BJ (cell line): ENCODE measurements at regions of chr12 and their contacts with region 1.

Region 1: DNA sequence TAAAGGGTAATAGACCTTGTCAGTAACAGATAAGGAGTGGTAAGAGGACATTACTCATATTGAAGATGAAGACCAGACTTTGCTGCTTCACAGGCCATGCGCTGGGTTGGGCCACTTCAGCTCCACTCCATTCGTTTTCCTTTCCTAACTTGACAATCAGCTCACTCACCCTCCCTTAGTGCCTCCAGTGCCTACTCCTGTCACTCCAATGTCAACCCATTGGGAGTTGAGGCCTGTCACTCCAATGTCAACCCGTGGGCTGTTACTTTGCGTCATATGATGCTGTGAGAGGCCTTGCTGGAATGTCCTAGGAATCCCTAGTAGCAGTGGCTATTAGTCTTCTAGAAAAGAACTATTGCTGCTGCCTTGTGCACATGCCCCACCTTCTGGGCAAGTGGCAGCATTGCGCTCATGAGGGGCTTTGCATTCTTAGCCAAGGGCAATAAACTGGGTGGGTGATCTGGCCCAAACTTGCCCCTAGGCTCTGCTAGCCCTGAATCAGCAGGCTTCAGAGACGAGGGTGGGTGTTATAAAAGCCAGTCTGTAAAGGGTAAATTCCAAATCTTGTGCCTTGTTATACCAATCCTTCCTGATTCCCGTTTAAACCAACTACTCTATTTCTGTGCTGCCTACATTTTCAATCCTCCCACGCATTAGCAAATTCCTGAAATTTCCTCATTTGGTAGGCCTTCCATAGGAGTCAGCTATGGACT is 36.1 kb downstream of the BAZ2A start:
- DNase-seq: peak; percentile 33
- H3K4me3 ChIP-seq: no peak overlapping the region
- H3K27me3 ChIP-seq: no peaks in the 10 kb centered on the region
- CTCF ChIP-seq: peak; percentile 90

Region 2: GRCh38 chr12:56431850-56432249 is 162.2 kb before region 1 on chr12:
- CTCF ChIA-PET with region 1: no interaction called
- POLR2A ChIA-PET with region 1: no interaction called
- DNase-seq: no peak
- H3K4me3 ChIP-seq: no peak overlapping the region
- H3K27me3 ChIP-seq: no peaks in the 10 kb centered on the region
- CTCF ChIP-seq: no peak

Region 3: GRCh38 chr12:56521590-56522371 is 72.3 kb before region 1 on chr12 and contains the start of gene RBMS2:
- CTCF ChIA-PET with region 1: interaction called, 21 read pairs
- POLR2A ChIA-PET with region 1: no interaction called
- DNase-seq: peak; percentile 77
- H3K4me3 ChIP-seq: peak within 1 kb of the TSS; percentile 49
- H3K27me3 ChIP-seq: no peaks in the 10 kb centered on the region
- CTCF ChIP-seq: no peak
- polyA plus RNA-seq, gene RBMS2: 67.9 and 68.4 TPM in 2 replicates

Region 4: DNA sequence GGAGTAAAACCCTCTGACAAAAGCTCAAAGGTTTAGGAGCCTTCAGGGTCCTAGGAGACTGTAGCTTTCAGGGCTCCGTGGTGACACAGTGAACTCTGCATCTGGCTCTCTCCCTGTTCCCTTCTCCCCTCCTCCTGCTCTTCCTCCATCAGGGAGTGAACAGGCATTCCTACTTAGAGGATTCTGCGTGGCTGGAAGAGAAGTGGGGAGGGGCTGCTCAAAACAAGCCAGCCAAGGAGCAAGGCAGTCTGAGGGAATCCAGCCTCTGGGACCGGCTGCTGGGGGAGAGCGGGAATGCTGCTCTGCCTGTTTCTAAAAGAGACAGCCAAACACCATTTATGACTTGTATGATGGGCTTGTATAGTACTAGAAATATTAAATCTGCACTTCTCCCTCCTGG is 22.9 kb before region 1 on chr12:
- CTCF ChIA-PET with region 1: interaction called, 10 read pairs
- POLR2A ChIA-PET with region 1: no interaction called
- DNase-seq: no peak
- H3K4me3 ChIP-seq: no peak overlapping the region
- H3K27me3 ChIP-seq: no peaks in the 10 kb centered on the region
- CTCF ChIP-seq: no peak

Region 5: DNA sequence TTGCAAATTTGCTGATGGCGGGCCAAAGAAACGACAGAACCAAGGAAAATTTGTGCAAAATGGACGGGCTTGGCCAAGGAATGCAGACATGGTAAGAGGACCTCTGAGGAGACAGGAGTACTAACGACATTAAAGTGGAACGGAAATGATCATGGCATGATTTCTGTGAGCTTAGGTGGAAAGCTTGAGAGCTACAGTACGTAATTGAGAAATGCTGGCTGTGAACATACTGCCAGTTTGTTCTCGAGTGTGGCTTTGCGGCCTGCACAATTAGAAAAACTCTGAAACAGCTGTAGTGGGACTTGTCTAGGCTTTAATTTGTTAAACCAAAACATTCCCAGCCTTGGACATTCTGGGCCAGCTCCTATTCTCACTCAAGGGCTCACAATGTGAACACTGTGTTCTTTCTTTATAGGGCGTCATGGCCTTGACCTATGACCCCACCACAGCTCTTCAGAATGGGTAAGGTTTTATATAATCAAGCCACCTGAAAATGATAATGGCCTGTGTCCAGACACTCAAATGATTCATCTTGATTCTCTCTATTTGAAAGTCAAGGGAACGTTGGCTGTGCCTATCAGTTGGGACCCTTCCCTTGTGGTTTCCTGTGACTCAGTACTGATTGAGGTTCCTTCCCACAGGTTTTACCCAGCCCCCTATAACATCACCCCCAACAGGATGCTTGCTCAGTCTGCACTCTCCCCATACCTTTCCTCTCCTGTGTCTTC is 12.5 kb before region 1 on chr12:
- CTCF ChIA-PET with region 1: interaction called, 25 read pairs
- POLR2A ChIA-PET with region 1: no interaction called
- DNase-seq: no peak
- H3K4me3 ChIP-seq: no peak overlapping the region
- H3K27me3 ChIP-seq: no peaks in the 10 kb centered on the region
- CTCF ChIP-seq: no peak

Region 6: GRCh38 chr12:56616925-56617324 is 22.9 kb after region 1 on chr12:
- CTCF ChIA-PET with region 1: interaction called, 12 read pairs
- POLR2A ChIA-PET with region 1: no interaction called
- DNase-seq: no peak
- H3K4me3 ChIP-seq: no peak overlapping the region
- H3K27me3 ChIP-seq: no peaks in the 10 kb centered on the region
- CTCF ChIP-seq: no peak

Region 7: GRCh38 chr12:56709759-56710376 is 115.8 kb after region 1 on chr12:
- CTCF ChIA-PET with region 1: no interaction called
- POLR2A ChIA-PET with region 1: no interaction called
- DNase-seq: no peak
- H3K4me3 ChIP-seq: no peak overlapping the region
- H3K27me3 ChIP-seq: no peaks in the 10 kb centered on the region
- CTCF ChIP-seq: no peak

Region 8: DNA sequence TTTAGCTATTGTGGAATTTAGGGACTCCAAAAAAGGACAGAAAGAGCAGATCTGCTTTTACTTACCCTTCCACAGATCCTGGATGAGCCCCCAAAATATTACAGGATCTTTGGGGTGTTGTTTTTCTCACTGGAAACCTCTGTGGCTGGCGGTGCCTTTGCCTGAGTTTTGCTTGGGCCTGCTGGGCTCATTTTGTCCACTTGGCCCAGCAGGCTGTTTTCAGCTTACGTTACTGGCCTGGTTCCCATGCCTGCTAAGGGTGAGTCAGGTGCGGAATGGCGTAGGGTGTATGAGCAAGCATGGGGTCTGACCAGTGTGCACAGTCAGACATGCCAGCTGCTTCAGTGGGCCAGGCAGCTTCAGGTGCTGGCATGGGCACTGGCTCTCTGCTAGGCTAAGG is 214.9 kb after region 1 on chr12:
- CTCF ChIA-PET with region 1: no interaction called
- POLR2A ChIA-PET with region 1: no interaction called
- DNase-seq: no peak
- H3K4me3 ChIP-seq: no peak overlapping the region
- H3K27me3 ChIP-seq: no peaks in the 10 kb centered on the region
- CTCF ChIP-seq: no peak

Region 9: GRCh38 chr12:56941299-56942017 is 347.4 kb after region 1 on chr12:
- CTCF ChIA-PET with region 1: no interaction called
- POLR2A ChIA-PET with region 1: no interaction called
- DNase-seq: peak; percentile 11
- H3K4me3 ChIP-seq: no peak overlapping the region
- H3K27me3 ChIP-seq: peaks cover 4% of the 10 kb centered on the region
- CTCF ChIP-seq: no peak